AG04449 (cell line): ENCODE measurements at regions of chr9 and their contacts with region 1.

Region 1: DNA sequence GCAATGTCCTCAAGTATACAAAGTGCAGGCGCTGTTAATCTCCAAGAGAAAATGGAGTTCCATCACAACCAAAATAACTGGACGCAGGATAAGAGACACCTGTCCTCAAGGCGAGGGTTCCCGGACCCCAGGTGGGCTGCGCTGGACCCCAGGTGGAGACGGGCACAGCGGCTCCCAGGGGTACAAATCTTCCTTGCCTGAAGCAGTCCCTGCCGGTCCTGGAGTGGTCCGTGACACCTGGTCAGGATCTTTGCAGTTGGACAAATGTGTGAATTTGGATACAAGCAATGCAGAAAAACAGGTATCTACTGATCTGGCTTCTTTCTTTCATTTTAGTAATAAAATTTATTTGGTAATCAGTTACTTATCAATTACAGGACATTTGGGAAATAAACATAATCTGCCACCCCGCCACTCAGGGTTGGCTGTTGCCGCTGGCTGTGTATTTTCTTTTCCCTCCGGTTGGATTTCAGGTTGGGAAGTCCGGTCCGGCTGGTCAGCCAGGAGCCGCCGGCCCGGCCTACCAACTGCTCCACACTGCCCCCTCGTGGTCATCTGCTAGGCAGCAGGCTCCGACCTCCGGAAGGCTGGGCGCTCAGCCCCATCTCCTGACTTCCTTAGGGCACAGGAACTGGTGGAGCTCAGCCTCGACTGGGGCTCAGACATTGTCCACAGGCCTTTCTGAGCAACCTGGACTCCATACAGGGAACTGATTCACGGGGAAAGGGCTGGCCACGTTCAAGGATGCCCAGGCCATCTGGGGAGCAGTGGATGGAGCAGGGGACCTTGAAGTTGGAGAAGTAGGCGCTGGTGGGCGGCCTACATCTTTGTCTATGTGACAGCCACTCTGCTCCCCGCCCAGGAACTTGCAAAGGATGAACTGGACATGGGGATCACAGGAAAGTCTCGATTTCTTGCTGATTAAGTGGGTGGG is 43.4 kb downstream of the NXNL2 start:
- DNase-seq: no peak
- H3K4me3 ChIP-seq: no peak overlapping the region
- CTCF ChIP-seq: peak; percentile 97

Region 2: GRCh38 chr9:88534456-88535261 is 43.7 kb before region 1 on chr9 and contains the start of gene NXNL2:
- CTCF ChIA-PET with region 1: interaction called, 12 read pairs
- POLR2A ChIA-PET with region 1: no interaction called
- DNase-seq: no peak
- H3K4me3 ChIP-seq: peak within 1 kb of the TSS; percentile 71
- CTCF ChIP-seq: no peak

Region 3: GRCh38 chr9:88559661-88560060 is 18.7 kb before region 1 on chr9:
- CTCF ChIA-PET with region 1: interaction called, 10 read pairs
- POLR2A ChIA-PET with region 1: no interaction called
- DNase-seq: no peak
- H3K4me3 ChIP-seq: no peak overlapping the region
- CTCF ChIP-seq: peak; percentile 7

Region 4: DNA sequence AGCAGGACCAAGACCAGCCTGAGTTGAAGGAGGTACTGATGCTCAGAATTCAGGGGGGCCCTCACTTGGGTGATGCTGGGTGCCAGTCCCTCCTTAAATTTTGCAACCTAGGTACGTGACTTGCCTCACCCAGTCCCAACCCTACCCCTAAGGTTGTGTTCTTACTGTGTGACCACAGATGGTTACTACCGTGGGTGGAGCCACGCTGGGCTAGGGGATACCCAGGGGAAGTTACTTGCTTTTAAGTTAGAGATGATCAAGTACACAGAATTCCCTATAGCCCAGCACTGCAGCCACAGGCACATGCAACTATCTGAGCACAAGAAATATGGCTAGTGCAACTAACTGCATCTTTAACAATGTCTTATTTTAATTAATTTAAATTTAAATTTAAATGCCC is 10.5 kb before region 1 on chr9:
- CTCF ChIA-PET with region 1: interaction called, 17 read pairs
- POLR2A ChIA-PET with region 1: no interaction called
- DNase-seq: no peak
- H3K4me3 ChIP-seq: no peak overlapping the region
- CTCF ChIP-seq: no peak

Region 5: GRCh38 chr9:88773627-88774244 is 195.3 kb after region 1 on chr9:
- CTCF ChIA-PET with region 1: no interaction called
- POLR2A ChIA-PET with region 1: no interaction called
- DNase-seq: no peak
- H3K4me3 ChIP-seq: no peak overlapping the region
- CTCF ChIP-seq: peak; percentile 19

Region 6: GRCh38 chr9:88852794-88853193 is 274.4 kb after region 1 on chr9:
- CTCF ChIA-PET with region 1: no interaction called
- POLR2A ChIA-PET with region 1: no interaction called
- DNase-seq: peak; percentile 52
- H3K4me3 ChIP-seq: no peak overlapping the region
- CTCF ChIP-seq: no peak